ENCODE measurements at regions of chr20 and their contacts with region 1.

Region 1: GRCh38 chr20:41339507-41340326 is 904 bp upstream of the LPIN3 start:
- DNase-seq: peak; percentile 88
- CTCF ChIP-seq: peak; percentile 98

Region 2: DNA sequence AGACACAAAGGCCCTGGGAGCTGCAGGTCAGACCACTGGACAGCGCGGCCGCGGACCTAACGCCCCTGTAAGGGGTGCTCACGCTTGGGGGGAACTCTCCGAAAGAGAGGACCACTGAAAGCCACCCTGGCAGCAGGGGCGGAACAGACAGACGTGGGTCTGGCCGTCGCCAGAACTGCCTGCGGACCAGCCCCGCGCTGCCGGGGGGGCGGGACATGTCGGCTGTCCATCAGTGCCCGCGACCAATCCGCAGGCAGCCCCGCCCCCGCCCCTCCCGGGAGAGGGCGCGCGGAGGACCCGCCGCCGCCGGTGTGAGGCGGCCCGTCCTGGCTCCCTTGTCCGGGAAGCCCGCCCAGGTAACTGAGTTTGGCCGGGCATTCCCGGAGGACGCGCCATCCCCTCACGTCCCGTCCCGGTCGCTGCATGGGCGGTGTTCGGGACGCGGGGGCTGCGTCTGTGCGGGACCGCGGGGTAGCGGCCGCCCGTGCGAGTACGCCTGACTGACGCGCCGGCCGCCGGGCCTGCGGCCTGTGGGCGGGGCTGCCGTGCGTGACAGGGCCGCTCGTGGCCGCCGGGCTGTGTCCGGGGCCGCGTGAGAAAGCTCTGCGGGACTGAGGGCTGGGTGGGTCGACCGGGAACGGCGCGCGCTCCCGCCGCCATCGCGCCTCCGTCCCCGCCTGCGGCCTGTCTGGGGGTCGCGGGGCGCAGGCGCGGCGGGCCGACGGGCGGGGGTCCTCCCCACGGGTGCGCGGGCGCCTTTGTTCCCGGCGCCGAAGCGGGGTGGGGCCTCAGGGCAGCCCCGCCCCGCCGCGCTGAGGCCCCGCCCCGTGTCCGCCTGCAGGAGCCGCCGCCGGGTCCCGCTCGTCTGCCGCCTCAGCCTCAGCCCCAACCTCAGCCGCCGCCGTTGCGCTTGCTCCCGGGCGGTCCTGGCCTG is 202.8 kb before region 1 on chr20 and contains the start of gene PLCG1:
- CTCF ChIA-PET with region 1: interaction called, 24 read pairs
- POLR2A ChIA-PET with region 1: no interaction called
- DNase-seq: peak; percentile 95
- CTCF ChIP-seq: no peak

Region 3: GRCh38 chr20:41167481-41168253 is 172.1 kb before region 1 on chr20:
- CTCF ChIA-PET with region 1: interaction called, 133 read pairs
- POLR2A ChIA-PET with region 1: no interaction called
- DNase-seq: no peak
- CTCF ChIP-seq: no peak

Region 4: DNA sequence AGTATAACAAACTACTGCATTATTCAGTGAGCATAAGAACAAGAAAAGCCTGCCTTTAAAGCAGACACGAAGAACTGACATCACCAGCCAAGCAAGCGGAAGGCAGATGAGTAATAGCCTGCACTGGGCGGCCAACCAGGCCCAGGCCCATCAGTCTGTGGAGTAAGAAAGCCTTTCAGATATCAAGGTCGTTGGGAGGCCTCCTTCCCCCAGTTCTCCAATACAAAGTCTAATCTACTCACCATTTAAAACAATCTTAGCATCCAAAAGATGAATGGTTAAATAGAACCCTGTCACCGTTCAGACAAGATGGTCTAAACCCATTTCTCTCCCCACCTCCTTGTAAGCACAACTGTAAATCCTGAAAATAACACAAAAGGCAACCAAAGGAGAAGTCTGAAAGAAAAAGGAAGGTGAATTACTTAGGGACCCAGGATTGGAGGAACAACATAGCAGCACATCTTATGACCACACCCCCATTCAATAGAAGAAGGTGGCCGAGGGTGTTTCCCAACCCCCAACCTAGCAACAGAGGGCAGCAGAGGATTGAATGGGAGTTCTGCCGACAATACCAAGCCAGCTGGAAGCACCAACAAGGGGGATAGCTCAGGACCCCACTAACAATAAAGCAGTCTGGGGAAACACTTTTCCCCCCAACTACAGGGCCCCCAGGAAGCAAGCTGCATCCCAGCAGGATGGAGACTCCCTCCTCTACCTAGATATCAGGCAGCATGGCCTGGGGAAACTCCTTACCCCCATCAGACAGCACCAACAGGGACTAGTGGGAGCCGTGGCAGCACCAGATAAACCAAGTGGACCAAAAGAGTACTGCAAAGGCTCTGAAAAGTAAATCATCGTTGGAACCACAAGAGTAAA is 90.1 kb before region 1 on chr20:
- CTCF ChIA-PET with region 1: interaction called, 18 read pairs
- POLR2A ChIA-PET with region 1: no interaction called
- DNase-seq: peak; percentile 45
- CTCF ChIP-seq: no peak

Region 5: GRCh38 chr20:41317536-41318270 is 22.0 kb before region 1 on chr20 and contains the start of gene ZHX3:
- CTCF ChIA-PET with region 1: interaction called, 10 read pairs
- POLR2A ChIA-PET with region 1: no interaction called
- DNase-seq: peak; percentile 100
- CTCF ChIP-seq: no peak

Region 6: GRCh38 chr20:41352108-41352507 is 12.4 kb after region 1 on chr20:
- CTCF ChIA-PET with region 1: interaction called, 12 read pairs
- POLR2A ChIA-PET with region 1: no interaction called
- DNase-seq: no peak
- CTCF ChIP-seq: no peak